ENCODE measurements at regions of chrX and their contacts with region 1.

Region 1: GRCh38 chrX:45515262-45516215 is 314.9 kb upstream of the DIPK2B start:
- DNase-seq: peak in 4 of 5 donors; percentile 20 to 51 (median 38)
- ATAC-seq: peak; percentile 64 to 90 (median 81)
- H3K4me3 ChIP-seq: peak overlapping the region in 1 of 12 donors; percentile 6
- H3K27ac ChIP-seq: peak overlapping the region in 2 of 12 donors; percentile 14 to 22
- H3K4me1 ChIP-seq: peaks cover 0 to 8% (median 0%) of the 10 kb centered on the region in 12 donors
- H3K27me3 ChIP-seq: peaks cover 0 to 15% (median 0%) of the 10 kb centered on the region in 9 donors
- CTCF ChIP-seq: peak; percentile 40 to 68 (median 56)
- POLR2A ChIP-seq: no peak

Region 2: GRCh38 chrX:45743081-45743533 is 227.6 kb after region 1 on chrX:
- intact Hi-C with region 1: loop called in 6 of 10 experiments (anchors 2 to 10 kb)
- DNase-seq: no peak
- ATAC-seq: peak in 2 of 4 donors; percentile 22 to 29
- H3K4me3 ChIP-seq: no peak overlapping the region
- H3K27ac ChIP-seq: no peak overlapping the region
- H3K4me1 ChIP-seq: peaks cover 0 to 3% (median 0%) of the 10 kb centered on the region in 12 donors
- H3K27me3 ChIP-seq: peaks cover 0 to 38% (median 0%) of the 10 kb centered on the region in 9 donors
- CTCF ChIP-seq: peak in 1 of 12 donors; percentile 6
- POLR2A ChIP-seq: no peak

Region 3: DNA sequence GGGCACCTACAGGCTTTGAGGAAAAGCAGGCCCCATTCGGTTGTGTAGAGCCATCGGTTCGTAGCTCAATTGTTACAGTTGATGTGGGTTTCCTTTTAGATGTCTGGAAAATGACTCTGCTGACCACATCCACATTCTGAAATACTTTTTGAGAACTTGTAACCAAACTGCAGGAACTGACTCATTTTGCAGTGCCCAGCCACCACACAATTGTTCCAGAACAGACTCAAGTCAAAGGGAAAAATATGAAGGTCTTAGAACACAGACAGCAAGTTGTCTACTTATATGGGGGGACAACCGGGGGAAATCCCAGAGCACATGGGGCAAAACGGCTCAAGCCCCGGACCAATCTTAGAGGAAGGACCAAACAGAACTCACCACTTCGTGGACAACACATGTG is 242.8 kb after region 1 on chrX:
- intact Hi-C with region 1: loop called in 3 of 10 experiments (anchors 5 to 10 kb)
- DNase-seq: no peak
- ATAC-seq: peak in 3 of 4 donors; percentile 42 to 57 (median 49)
- H3K4me3 ChIP-seq: peak overlapping the region in 1 of 12 donors; percentile 34
- H3K27ac ChIP-seq: peak overlapping the region in 8 of 12 donors; percentile 1 to 88 (median 26)
- H3K4me1 ChIP-seq: peaks cover 0 to 85% (median 0%) of the 10 kb centered on the region in 12 donors
- H3K27me3 ChIP-seq: peaks cover 0 to 15% (median 0%) of the 10 kb centered on the region in 9 donors
- CTCF ChIP-seq: no peak
- POLR2A ChIP-seq: no peak

Region 4: GRCh38 chrX:45843518-45843917 is 328.0 kb after region 1 on chrX:
- intact Hi-C with region 1: loop called in 8 of 10 experiments (anchors 5 to 10 kb)
- DNase-seq: no peak
- ATAC-seq: no peak
- H3K4me3 ChIP-seq: no peak overlapping the region
- H3K27ac ChIP-seq: no peak overlapping the region
- H3K4me1 ChIP-seq: no peaks in the 10 kb centered on the region
- H3K27me3 ChIP-seq: peaks cover 0 to 17% (median 0%) of the 10 kb centered on the region in 9 donors
- CTCF ChIP-seq: peak in 5 of 12 donors; percentile 7 to 39 (median 24)
- POLR2A ChIP-seq: no peak

Region 5: GRCh38 chrX:46376246-46376885 is 860.8 kb after region 1 on chrX:
- intact Hi-C with region 1: loop called in 1 of 10 experiments (anchors 10 kb)
- DNase-seq: peak in 1 of 5 donors; percentile 4
- ATAC-seq: peak; percentile 55 to 83 (median 75)
- H3K4me3 ChIP-seq: no peak overlapping the region
- H3K27ac ChIP-seq: no peak overlapping the region
- H3K4me1 ChIP-seq: no peaks in the 10 kb centered on the region
- H3K27me3 ChIP-seq: peaks cover 0 to 19% (median 0%) of the 10 kb centered on the region in 9 donors
- CTCF ChIP-seq: peak in 7 of 12 donors; percentile 20 to 43 (median 28)
- POLR2A ChIP-seq: no peak

Region 6: DNA sequence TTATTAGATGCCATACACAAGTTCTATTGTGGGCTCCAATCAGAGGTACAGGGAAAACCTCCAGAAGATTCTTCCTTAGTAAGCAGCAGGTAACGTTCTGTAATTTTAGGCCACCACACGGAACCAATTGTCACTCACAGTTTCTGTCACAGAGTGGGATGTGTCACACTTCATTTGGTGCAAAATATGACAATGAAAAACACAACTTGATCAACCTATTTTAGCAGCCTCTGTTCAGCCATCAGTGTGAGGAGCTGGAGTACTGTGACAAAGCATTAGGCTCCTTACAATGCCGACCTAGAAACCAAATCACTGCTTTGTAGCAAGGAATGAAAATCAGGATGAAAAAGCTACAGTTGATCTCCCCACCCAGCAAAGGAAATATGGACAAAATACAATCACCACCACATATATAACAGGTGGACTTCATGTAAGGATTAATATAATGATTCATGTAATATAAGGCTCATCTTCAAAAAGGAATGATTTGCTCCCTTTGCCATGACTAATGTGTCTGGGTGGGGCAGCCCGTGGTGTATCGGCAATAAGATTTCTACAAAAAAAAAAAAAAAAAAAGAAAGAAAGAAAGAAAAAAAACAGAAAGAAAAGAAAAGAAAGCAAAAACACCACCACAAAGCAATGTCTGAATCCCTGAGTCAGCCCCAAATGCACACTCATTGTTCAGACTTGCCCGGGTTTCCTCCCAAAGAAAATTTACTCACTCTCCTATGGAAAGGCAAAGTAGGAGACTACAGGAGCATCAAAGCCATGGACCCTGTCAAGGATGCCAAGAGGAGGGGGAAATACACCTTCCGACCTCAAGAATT is 1207.4 kb after region 1 on chrX:
- intact Hi-C with region 1: no loop called
- DNase-seq: no peak
- ATAC-seq: no peak
- H3K4me3 ChIP-seq: no peak overlapping the region
- H3K27ac ChIP-seq: no peak overlapping the region
- H3K4me1 ChIP-seq: no peaks in the 10 kb centered on the region
- H3K27me3 ChIP-seq: peaks cover 0 to 13% (median 0%) of the 10 kb centered on the region in 9 donors
- CTCF ChIP-seq: no peak
- POLR2A ChIP-seq: no peak